Vagina (tissue), 2 donors: ENCODE measurements at regions of chr9 and their contacts with region 1.

Region 1: DNA sequence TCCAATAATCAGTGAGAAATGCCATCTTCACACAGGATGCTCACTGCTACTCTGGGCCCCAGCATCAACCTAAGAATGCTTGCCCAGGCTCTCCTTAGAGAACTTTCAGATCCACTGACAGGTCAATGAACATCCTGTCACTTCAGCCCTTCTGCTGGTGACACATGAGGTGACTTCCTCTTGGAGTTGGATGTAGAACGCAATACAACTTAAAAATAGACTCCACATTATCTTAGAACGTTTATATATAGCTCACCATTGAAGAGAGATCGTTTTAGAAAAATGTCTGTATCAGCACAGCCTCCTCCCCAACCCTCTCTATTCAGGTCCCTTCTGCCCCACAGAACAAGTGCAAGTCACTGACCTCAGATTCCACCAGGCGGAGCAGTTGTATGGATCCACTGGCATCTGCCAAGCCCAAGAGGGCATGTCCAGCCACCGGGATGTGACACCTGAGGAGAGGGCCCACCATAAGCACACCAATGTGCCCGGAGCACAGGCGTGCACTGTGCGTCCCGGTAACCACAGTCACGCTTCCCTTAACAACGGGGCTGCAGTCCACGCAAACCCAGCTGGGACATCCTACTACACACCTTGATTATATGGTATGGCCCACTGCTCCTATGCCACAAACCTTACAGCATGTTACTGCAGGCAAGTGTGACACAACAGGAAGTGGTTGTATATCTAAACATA is 2.9 kb downstream of the DPH7 start:
- DNase-seq: no peak
- H3K4me3 ChIP-seq: no peak overlapping the region
- H3K27ac ChIP-seq: no peak overlapping the region
- H3K4me1 ChIP-seq: peaks cover 38% of the 10 kb centered on the region
- H3K27me3 ChIP-seq: no peaks in the 10 kb centered on the region
- CTCF ChIP-seq: no peak
- POLR2A ChIP-seq: no peak

Region 2: GRCh38 chr9:137138722-137139467 is 437.0 kb before region 1 on chr9 and contains the start of gene GRIN1:
- intact Hi-C with region 1: no loop called
- DNase-seq: no peak
- H3K4me3 ChIP-seq: no peak within 1 kb of the TSS
- H3K27ac ChIP-seq: no peak within 1 kb of the TSS
- H3K4me1 ChIP-seq: peaks cover 11% of the 10 kb centered on the region
- H3K27me3 ChIP-seq: no peaks in the 10 kb centered on the region
- CTCF ChIP-seq: no peak
- POLR2A ChIP-seq: no peak
- total RNA-seq, gene GRIN1: 0.74 TPM

Region 3: DNA sequence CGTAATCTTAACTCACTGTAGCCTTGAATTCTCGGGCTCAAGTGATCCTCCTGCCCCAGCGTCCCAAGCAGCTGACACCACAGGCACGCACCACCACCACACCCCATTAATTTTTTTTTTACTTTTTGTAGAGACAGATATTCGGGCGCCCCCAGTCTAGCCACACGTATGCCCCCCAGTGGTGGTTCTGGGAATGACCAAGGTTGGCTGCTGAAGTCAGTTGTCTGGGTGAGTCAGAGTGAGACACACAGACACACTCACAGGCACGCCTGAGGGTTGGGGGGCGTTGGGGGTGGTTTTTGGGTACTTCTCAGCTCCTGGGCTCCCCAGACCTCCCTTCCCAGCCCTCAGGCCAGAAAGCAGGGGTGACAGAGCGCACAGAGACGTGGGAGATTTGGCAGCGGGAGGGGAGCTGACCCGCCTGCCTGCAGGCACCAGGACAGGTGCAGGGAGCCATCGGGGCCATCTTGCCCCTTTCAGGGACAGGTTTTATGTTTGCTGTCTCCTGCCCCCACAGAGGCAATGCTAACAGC is 130.5 kb before region 1 on chr9:
- intact Hi-C with region 1: no loop called
- DNase-seq: no peak
- H3K4me3 ChIP-seq: no peak overlapping the region
- H3K27ac ChIP-seq: no peak overlapping the region
- H3K4me1 ChIP-seq: peaks cover 22% of the 10 kb centered on the region
- H3K27me3 ChIP-seq: no peaks in the 10 kb centered on the region
- CTCF ChIP-seq: peak; percentile 68 to 80 (median 73)
- POLR2A ChIP-seq: no peak

Region 4: DNA sequence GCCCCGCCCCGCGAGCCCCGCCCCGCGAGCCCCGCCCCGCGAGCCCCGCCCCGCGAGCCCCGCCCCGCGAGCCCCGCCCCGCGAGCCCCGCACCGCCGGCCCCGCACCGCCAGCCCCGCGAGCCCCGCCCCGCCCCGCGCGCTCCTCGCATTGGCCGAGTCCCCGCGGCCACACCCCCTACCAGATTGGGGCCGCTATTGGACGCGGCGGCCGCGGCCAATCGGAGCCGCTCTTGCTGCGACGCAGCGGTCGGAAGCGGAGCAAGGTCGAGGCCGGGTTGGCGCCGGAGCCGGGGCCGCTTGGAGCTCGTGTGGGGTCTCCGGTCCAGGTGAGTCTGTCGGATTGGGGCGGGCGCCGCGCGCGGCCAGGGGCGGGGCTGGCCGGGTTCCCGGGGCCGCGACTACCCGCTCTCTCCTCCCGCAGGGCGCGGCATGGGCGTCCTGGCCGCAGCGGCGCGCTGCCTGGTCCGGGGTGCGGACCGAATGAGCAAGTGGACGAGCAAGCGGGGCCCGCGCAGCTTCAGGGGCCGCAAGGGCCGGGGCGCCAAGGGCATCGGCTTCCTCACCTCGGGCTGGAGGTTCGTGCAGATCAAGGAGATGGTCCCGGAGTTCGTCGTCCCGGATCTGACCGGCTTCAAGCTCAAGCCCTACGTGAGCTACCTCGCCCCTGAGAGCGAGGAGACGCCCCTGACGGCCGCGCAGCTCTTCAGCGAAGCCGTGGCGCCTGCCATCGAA is 24.0 kb before region 1 on chr9 and contains the start of gene MRPL41:
- intact Hi-C with region 1: no loop called
- DNase-seq: no peak
- H3K4me3 ChIP-seq: peak within 1 kb of the TSS; percentile 85 to 90
- H3K27ac ChIP-seq: peak within 1 kb of the TSS; percentile 93
- H3K4me1 ChIP-seq: peaks cover 20% of the 10 kb centered on the region
- H3K27me3 ChIP-seq: no peaks in the 10 kb centered on the region
- CTCF ChIP-seq: no peak
- POLR2A ChIP-seq: peak in 1 of 2 donors; percentile 40
- total RNA-seq, gene MRPL41: 83.7 TPM

Region 5: GRCh38 chr9:137564817-137565411 is 10.9 kb before region 1 on chr9:
- intact Hi-C with region 1: loop called (anchors 2 kb)
- DNase-seq: no peak
- H3K4me3 ChIP-seq: no peak overlapping the region
- H3K27ac ChIP-seq: no peak overlapping the region
- H3K4me1 ChIP-seq: no peaks in the 10 kb centered on the region
- H3K27me3 ChIP-seq: no peaks in the 10 kb centered on the region
- CTCF ChIP-seq: no peak
- POLR2A ChIP-seq: no peak

Region 6: GRCh38 chr9:137650259-137650658 is 74.4 kb after region 1 on chr9:
- intact Hi-C with region 1: loop called (anchors 2 kb)
- DNase-seq: no peak
- H3K4me3 ChIP-seq: no peak overlapping the region
- H3K27ac ChIP-seq: no peak overlapping the region
- H3K4me1 ChIP-seq: no peaks in the 10 kb centered on the region
- H3K27me3 ChIP-seq: no peaks in the 10 kb centered on the region
- CTCF ChIP-seq: no peak
- POLR2A ChIP-seq: no peak